ENCODE measurements at regions of chr18 and their contacts with region 1.

Region 1: DNA sequence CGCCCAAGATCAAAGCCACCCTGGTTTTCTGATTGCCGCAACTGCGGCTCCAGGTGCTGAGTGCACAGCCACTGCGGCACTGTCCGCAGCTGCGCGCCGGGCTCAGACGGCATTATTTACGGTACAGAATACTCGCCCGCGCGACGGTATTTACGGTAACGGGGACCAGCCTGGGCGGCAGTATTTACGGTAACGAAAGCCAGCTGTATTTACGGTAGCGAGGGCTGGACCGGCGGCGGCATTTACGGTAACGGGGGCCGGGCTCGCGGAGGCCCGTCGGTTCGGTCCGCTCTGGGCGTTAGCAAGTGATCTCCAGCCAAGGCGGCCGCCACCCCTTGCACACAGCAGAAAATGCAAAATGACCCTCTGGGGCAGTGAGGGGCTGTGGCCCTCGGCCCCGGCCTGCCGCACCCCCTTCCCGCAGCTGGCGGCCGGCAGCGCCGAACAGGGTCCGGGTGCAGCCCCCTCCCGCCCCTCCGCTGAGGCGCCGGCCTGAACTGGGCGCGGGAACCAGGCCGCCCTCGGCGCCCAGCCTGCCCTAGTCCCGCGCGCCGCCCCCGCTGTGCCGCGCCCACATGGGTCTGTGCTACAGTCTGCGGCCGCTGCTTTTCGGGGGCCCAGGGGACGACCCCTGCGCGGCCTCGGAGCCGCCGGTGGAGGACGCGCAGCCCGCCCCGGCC is at the start of gene GNAL:
- DNase-seq: peak; percentile 83 to 88
- H3K4me3 ChIP-seq: peak within 1 kb of the TSS; percentile 65 to 78
- H3K27ac ChIP-seq: peak within 1 kb of the TSS; percentile 67 to 77
- H3K4me1 ChIP-seq: peaks cover 0 to 15% (median 7%) of the 10 kb centered on the region in 4 donors
- H3K27me3 ChIP-seq: no peaks in the 10 kb centered on the region
- CTCF ChIP-seq: no peak

Region 2: DNA sequence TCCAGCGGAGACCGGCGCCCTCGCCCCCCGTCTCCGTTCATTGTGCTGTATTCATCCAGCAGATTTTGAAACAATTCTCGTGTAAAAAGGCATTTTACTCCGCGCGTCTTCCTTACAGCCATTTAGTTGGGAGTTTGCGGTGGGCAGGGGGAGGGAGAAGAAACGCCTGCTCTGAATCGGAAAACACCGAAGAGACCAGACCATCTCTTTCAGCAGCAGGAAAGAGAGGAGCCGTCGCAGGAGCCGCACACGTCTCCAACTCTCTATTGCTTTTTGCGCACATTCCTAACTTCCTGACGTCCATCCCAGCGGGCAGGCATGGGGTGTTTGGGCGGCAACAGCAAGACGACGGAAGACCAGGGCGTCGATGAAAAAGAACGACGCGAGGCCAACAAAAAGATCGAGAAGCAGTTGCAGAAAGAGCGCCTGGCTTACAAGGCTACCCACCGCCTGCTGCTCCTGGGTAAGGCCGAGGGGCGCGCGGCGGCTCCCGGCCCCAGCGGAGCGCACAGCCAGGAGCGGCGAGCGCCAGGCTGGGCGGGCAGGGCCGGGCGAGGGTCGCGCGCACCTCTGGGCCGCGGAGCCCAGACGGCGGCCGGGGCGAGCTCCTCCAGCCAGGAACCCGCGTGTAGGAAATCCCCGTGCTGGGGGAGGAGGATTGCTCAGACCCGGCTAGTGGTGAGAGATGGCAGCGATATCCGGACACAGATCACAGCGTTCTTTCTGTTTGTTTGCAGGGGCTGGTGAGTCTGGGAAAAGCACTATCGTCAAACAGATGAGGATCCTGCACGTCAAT is 63.2 kb after region 1 on chr18:
- intact Hi-C with region 1: loop called (anchors 10 kb)
- DNase-seq: no peak
- H3K4me3 ChIP-seq: peak overlapping the region; percentile 31 to 44
- H3K27ac ChIP-seq: no peak overlapping the region
- H3K4me1 ChIP-seq: peaks cover 0 to 24% (median 14%) of the 10 kb centered on the region in 4 donors
- H3K27me3 ChIP-seq: peaks cover 0 to 19% of the 10 kb centered on the region in 2 donors
- CTCF ChIP-seq: no peak

Measured in tibial artery (tissue), 4 donors.